GM23248 (cell line): ENCODE measurements at regions of chr3 and their contacts with region 1.

Region 1: GRCh38 chr3:141311496-141312353 is 56.6 kb upstream of the ZBTB38 start:
- DNase-seq: peak; percentile 98
- H3K4me3 ChIP-seq: peak overlapping the region; percentile 89
- H3K27ac ChIP-seq: peak overlapping the region; percentile 31
- H3K4me1 ChIP-seq: peaks cover 7% of the 10 kb centered on the region; the same call in 1 of the 2 replicates
- H3K27me3 ChIP-seq: no peaks in the 10 kb centered on the region

Region 2: GRCh38 chr3:139758654-139759291 is 1553.0 kb before region 1 on chr3:
- in situ Hi-C with region 1: no loop called
- DNase-seq: no peak
- H3K4me3 ChIP-seq: no peak overlapping the region
- H3K27ac ChIP-seq: no peak overlapping the region
- H3K4me1 ChIP-seq: no peaks in the 10 kb centered on the region
- H3K27me3 ChIP-seq: peaks cover 7% of the 10 kb centered on the region; the same call in 1 of the 2 replicates

Region 3: GRCh38 chr3:140842984-140843649 is 468.6 kb before region 1 on chr3:
- in situ Hi-C with region 1: no loop called
- DNase-seq: no peak
- H3K4me3 ChIP-seq: no peak overlapping the region
- H3K27ac ChIP-seq: no peak overlapping the region
- H3K4me1 ChIP-seq: no peaks in the 10 kb centered on the region
- H3K27me3 ChIP-seq: no peaks in the 10 kb centered on the region

Region 4: DNA sequence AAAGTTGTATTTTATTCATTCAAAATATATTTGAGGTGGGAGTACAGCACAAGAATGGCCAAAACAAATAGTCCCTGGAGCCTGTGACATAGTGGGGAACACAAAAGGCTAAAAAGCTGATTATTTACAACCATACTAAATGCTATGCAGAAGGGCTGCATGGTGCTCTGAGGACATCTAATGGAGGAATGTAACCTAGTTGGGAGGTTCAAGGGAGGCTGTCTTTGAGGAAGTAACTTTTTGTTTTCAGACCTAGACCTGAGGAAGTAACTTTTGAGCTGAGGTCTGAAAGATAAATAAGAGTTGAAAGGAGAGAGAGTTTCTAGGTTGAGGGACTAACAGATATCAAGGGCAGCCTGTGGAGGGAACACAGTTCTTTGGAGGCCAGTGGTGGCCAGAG is 140.3 kb after region 1 on chr3:
- in situ Hi-C with region 1: loop called (anchors 10 kb)
- DNase-seq: peak; percentile 75
- H3K4me3 ChIP-seq: no peak overlapping the region
- H3K27ac ChIP-seq: 0 out of 2 replicates have a peak overlapping the region, but pooled peaks have one; percentile 18
- H3K4me1 ChIP-seq: peaks cover 62% of the 10 kb centered on the region
- H3K27me3 ChIP-seq: no peaks in the 10 kb centered on the region

Region 5: DNA sequence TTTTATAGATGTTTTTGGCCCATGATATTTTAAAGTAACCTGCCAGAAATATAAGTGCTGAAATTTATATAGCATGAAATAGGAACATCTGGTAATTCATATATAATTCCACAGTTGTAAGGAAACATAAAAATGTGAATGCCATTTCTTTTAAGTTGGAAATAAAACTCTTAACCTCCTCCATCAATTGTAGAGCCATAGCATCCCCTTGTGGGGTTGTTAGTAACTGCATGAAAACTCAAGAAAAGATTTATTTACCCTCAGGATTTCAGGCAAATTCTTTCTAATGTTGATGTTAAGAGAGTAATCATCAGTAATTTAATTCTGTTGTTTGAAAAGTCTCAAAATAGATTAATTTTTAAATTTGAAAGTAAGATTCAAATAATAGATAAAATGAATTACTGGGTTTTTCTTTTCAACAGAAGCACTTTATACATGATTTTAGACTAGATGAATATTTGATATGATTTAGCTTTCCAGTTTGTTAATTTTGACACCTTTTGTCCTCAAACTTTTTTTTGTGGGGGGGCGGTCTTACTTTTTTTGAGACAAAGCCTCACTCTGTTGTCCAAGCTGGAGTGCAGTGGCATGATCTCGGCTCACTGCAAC is 249.8 kb after region 1 on chr3:
- in situ Hi-C with region 1: loop called (anchors 25 kb)
- DNase-seq: peak; percentile 67
- H3K4me3 ChIP-seq: no peak overlapping the region
- H3K27ac ChIP-seq: no peak overlapping the region
- H3K4me1 ChIP-seq: peaks cover 29% of the 10 kb centered on the region
- H3K27me3 ChIP-seq: no peaks in the 10 kb centered on the region

Region 6: DNA sequence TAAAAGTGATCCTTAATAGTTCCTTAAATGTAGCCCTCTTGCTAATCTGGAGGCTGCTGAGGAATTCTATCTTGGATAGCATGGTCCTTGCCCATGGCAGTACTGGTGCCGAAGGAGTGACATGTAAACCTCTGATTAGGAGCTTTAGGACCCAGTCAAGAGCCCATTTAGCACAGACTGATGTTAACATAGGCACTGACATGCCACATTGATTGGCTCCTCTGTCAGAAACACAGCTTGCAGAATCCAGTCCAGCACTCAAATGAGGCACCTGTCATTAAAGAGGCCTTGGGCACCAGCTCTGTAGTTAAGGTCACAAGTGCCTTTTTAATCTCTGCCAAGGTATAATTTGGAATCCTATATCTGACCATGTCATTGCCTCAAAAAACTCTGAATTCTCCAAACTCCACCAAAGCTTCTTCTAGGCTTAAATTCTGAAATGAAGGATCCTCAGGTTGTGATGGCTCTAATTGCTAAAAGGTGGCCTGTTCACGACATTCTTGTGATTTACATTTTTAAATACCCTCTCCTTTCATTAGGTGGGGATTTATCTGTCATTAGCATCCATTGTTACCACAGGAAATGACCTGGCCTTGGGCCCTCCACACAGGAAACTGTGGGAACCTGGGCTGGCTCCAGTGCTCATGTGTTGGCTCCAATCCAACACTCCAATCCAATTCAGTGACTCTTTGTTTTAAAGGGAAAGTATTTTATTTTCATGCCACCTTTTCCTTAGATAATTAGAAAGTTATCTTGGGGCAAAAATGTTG is 369.1 kb after region 1 on chr3:
- in situ Hi-C with region 1: no loop called
- DNase-seq: peak; percentile 67
- H3K4me3 ChIP-seq: no peak overlapping the region
- H3K27ac ChIP-seq: no peak overlapping the region
- H3K4me1 ChIP-seq: peaks cover 5% of the 10 kb centered on the region; the same call in 1 of the 2 replicates
- H3K27me3 ChIP-seq: no peaks in the 10 kb centered on the region